Breast epithelium (tissue), 4 donors: ENCODE measurements at regions of chr19 and their contacts with region 1.

Region 1: DNA sequence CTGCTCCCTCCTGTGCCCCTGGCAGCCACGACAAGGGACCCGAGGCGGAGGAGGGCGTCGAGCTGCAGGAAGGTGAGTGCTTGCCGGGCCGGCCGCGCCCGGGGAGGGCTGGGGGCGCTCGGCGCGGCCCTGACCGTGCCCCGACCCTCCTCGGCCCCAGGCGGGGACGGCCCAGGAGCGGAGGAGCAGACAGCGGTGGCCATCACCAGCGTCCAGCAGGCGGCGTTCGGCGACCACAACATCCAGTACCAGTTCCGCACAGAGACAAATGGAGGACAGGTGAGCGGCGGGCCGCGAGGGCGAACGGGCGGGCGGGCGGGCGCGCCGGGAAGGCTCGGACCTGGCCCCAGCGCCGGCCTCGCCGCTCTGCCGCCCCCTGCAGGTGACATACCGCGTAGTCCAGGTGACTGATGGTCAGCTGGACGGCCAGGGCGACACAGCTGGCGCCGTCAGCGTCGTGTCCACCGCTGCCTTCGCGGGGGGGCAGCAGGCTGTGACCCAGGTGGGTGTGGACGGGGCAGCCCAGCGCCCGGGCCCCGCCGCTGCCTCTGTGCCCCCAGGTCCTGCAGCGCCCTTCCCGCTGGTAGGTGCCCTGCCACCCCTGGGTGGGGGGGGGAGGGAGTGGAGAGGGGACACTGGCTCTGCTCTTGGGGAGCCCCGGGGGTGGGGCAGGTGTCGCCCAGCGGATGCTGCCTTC is 807 bp downstream of the USF2 start:
- DNase-seq: peak; percentile 81 to 88
- H3K4me3 ChIP-seq: peak overlapping the region; percentile 66 to 94 (median 73)
- H3K27ac ChIP-seq: peak overlapping the region; percentile 84 to 95
- H3K4me1 ChIP-seq: peaks cover 5 to 18% of the 10 kb centered on the region in 2 donors
- H3K27me3 ChIP-seq: no peaks in the 10 kb centered on the region
- CTCF ChIP-seq: peak; percentile 27 to 63 (median 46)
- POLR2A ChIP-seq: no peak

Region 2: GRCh38 chr19:33678796-33679585 is 1590.6 kb before region 1 on chr19:
- intact Hi-C with region 1: no loop called
- DNase-seq: peak; percentile 27 to 43
- H3K4me3 ChIP-seq: no peak overlapping the region
- H3K27ac ChIP-seq: no peak overlapping the region
- H3K4me1 ChIP-seq: no peaks in the 10 kb centered on the region
- H3K27me3 ChIP-seq: peaks cover 0 to 45% of the 10 kb centered on the region in 2 donors
- CTCF ChIP-seq: no peak
- POLR2A ChIP-seq: no peak

Region 3: GRCh38 chr19:35154525-35155406 is 114.8 kb before region 1 on chr19 and contains the start of gene FXYD5:
- intact Hi-C with region 1: loop called (anchors 10 kb)
- DNase-seq: peak in 1 of 2 donors; percentile 72
- H3K4me3 ChIP-seq: peak within 1 kb of the TSS; percentile 69 to 82 (median 75)
- H3K27ac ChIP-seq: peak within 1 kb of the TSS; percentile 77 to 85
- H3K4me1 ChIP-seq: no peaks in the 10 kb centered on the region
- H3K27me3 ChIP-seq: no peaks in the 10 kb centered on the region
- CTCF ChIP-seq: peak in 1 of 3 donors; percentile 24
- POLR2A ChIP-seq: no peak
- total RNA-seq, gene FXYD5: 52.4 to 56.7 (median 56.2) TPM

Region 4: DNA sequence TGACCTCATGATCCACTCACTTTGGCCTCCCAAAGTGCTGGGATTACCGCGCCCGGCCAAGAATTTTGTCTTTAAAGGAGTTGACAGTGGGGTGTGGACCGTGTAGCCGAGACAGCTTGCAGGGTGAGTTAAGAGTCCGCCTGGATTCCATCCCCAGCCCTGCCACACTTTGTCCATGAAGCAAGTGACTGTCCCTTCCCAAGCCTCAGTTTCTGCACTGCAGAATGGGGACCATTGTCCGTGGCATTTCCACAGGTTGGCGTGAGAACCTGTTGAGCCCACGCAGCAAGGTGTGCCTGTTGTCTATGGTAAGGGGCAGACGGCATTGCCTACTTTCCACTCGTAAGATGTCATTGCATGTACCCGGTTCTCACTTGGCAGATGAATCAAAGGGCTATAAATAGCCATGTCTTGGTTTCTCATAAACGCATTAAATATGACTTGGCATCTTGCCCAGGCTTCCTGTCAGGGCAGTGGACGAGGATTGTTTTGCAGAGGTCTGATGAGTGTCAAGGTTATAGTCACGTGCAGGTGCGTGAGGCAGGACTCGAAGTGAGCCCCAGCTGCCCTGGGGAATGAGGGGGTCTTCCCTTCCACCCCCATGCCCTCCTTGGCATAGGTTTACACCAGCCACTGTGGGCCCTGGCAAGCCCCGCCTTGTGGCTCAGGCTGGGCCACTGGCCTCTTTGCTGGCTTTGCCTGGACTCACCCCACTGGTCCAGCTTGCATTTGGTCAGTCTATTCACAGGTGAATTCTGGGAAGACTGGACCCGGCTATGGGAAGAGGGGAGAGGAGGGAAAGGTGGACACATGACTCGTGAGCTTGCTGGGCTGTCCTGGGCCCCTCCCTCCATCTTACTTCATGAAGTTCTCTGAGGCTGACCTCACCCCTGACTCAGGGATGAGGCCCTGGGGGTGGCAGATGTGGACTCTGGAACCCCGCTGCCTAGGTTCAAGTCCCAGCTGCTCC is 55.6 kb before region 1 on chr19:
- intact Hi-C with region 1: no loop called
- DNase-seq: peak; percentile 55 to 74
- H3K4me3 ChIP-seq: peak overlapping the region in 1 of 3 donors; percentile 37
- H3K27ac ChIP-seq: peak overlapping the region; percentile 78 to 93
- H3K4me1 ChIP-seq: peaks cover 0 to 4% of the 10 kb centered on the region in 2 donors
- H3K27me3 ChIP-seq: no peaks in the 10 kb centered on the region
- CTCF ChIP-seq: no peak
- POLR2A ChIP-seq: no peak

Region 5: DNA sequence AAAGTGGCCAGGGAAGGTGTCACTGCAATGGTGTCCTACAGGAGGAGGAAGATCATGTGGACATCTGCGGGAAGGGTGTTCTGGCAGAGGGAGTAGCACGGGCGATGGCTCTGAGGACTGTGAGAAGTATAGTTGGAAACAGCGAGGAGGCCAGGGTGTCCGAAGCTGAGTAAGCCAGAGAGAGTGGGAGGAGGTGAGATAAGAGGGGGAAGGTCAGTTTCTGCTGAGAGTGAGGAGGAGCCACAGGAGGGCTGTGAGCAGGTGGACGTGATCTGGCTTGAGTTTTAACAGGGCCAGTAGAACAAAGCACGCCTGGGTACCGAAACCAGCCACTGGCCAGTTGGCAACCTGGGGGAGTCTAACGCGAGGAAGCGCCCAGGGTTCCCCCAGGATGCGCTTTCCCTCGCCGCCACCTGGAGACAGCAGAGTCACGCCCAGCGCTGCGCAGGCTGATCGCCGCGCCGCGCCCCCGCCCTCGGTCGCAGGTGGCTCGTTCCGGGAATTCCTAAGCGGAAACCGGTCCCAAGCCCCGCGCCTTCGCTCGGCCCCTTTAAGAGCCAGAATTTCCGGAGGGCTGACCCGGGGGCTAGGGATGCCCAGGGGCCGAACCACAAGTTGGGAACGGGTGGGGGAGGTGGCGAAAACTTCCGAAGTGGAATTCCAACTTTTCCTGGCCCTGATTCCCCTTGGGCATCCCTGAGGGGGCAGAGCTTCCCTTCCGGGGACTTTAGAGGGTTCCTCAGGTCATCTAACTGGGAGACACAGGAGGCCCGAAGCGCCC is 21.9 kb before region 1 on chr19:
- intact Hi-C with region 1: loop called (anchors 2 kb)
- DNase-seq: peak; percentile 82 to 86
- H3K4me3 ChIP-seq: peak overlapping the region; percentile 40 to 82 (median 70)
- H3K27ac ChIP-seq: peak overlapping the region; percentile 95 to 97
- H3K4me1 ChIP-seq: peaks cover 0 to 6% of the 10 kb centered on the region in 2 donors
- H3K27me3 ChIP-seq: no peaks in the 10 kb centered on the region
- CTCF ChIP-seq: peak in 2 of 3 donors; percentile 50 to 82
- POLR2A ChIP-seq: no peak

Region 6: GRCh38 chr19:35309481-35310279 is 40.1 kb after region 1 on chr19:
- intact Hi-C with region 1: no loop called
- DNase-seq: peak in 1 of 2 donors; percentile 53
- H3K4me3 ChIP-seq: peak overlapping the region in 1 of 3 donors; percentile 32
- H3K27ac ChIP-seq: peak overlapping the region in 1 of 2 donors; percentile 36
- H3K4me1 ChIP-seq: peaks cover 0 to 5% of the 10 kb centered on the region in 2 donors
- H3K27me3 ChIP-seq: no peaks in the 10 kb centered on the region
- CTCF ChIP-seq: no peak
- POLR2A ChIP-seq: no peak

Region 7: DNA sequence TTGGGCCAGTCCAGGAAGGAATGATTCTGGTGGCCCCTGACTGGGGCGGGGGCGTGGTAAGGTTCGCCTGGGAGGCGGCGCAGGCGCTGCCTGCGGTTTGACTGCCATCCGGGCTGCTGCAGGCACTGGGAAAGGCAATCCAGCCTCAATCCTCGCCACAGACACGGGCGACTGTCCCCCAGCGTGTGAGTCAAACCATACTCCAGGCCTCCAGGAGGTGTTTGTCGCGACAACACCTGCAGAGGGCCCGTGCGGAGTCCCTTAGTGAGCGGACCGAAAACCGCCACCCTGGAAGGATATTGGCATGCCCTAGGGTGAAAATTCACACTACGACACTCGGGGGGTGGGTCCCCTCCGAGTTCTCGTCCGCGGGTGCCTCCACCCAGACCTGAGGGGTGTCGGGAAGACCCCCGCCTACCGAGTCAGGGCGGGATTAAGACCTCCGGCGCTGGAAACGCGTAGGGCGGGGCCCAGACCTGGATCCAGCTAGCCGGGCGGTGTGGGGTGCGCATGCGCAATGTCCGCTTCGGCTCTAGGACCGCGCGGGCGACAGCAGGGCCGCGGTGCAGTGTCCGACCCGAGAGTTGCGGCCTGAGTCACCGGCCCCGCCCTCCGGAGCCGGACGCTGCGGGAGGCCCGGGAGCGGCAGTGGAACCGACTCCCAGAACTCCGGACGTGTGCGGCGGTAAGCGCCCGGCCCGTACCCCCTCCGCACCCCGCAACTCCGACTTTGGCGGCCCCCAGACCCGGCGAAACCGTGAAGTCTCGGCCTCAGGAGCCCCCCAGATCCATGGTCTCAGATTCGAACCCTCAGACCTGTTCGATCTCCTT is 870.1 kb after region 1 on chr19 and contains the start of gene CAPNS1:
- intact Hi-C with region 1: loop called (anchors 5 kb)
- DNase-seq: peak; percentile 95 to 96
- H3K4me3 ChIP-seq: peak within 1 kb of the TSS; percentile 87 to 96 (median 89)
- H3K27ac ChIP-seq: peak within 1 kb of the TSS; percentile 97 to 100
- H3K4me1 ChIP-seq: peaks cover 0 to 4% of the 10 kb centered on the region in 2 donors
- H3K27me3 ChIP-seq: no peaks in the 10 kb centered on the region
- CTCF ChIP-seq: no peak
- POLR2A ChIP-seq: peak; percentile 91
- total RNA-seq, gene CAPNS1: 144 to 286 (median 200) TPM